CD8-positive, alpha-beta memory T cell (primary cell): ENCODE measurements at regions of chr5 and their contacts with region 1.

Region 1: GRCh38 chr5:141564216-141564692 is 54.5 kb downstream of the DIAPH1 start:
- DNase-seq: peak; percentile 45 to 84 (median 72)
- H3K4me3 ChIP-seq: no peak overlapping the region
- H3K4me3 Mint-ChIP-seq: peak overlapping the region in 1 of 7 donors; percentile 5
- H3K27ac ChIP-seq: no peak overlapping the region
- H3K27ac Mint-ChIP-seq: peak overlapping the region; percentile 43 to 95 (median 82)
- H3K4me1 ChIP-seq: peaks cover 4% of the 10 kb centered on the region
- H3K4me1 Mint-ChIP-seq: peaks cover 33 to 58% (median 38%) of the 10 kb centered on the region in 3 donors
- H3K27me3 ChIP-seq: no peaks in the 10 kb centered on the region
- H3K27me3 Mint-ChIP-seq: no peaks in the 10 kb centered on the region

Region 2: GRCh38 chr5:141320225-141321169 is 243.8 kb before region 1 on chr5 and contains the start of gene TAF7:
- CTCF ChIA-PET with region 1: interaction called, 23 read pairs
- POLR2A ChIA-PET with region 1: interaction called, 5 read pairs
- DNase-seq: peak; percentile 89 to 95 (median 90)
- H3K4me3 ChIP-seq: peak within 1 kb of the TSS; percentile 96
- H3K4me3 Mint-ChIP-seq: peak within 1 kb of the TSS; percentile 91 to 99 (median 95)
- H3K27ac ChIP-seq: peak within 1 kb of the TSS; percentile 97
- H3K27ac Mint-ChIP-seq: peak within 1 kb of the TSS; percentile 95 to 99 (median 99)
- H3K4me1 ChIP-seq: peaks cover 16% of the 10 kb centered on the region
- H3K4me1 Mint-ChIP-seq: peaks cover 26 to 48% (median 31%) of the 10 kb centered on the region in 3 donors
- H3K27me3 ChIP-seq: no peaks in the 10 kb centered on the region
- H3K27me3 Mint-ChIP-seq: peaks cover 4% of the 10 kb centered on the region in 2 donors
- total RNA-seq, gene TAF7: 70.9 to 72.2 TPM

Region 3: GRCh38 chr5:141512390-141512910 is 51.8 kb before region 1 on chr5:
- CTCF ChIA-PET with region 1: interaction called, 21 read pairs
- POLR2A ChIA-PET with region 1: no interaction called
- DNase-seq: peak; percentile 67 to 88 (median 79)
- H3K4me3 ChIP-seq: peak overlapping the region; percentile 65
- H3K4me3 Mint-ChIP-seq: peak overlapping the region; percentile 74 to 88 (median 85)
- H3K27ac ChIP-seq: no peak overlapping the region
- H3K27ac Mint-ChIP-seq: peak overlapping the region in 4 of 8 donors; percentile 27 to 74 (median 65)
- H3K4me1 ChIP-seq: peaks cover 23% of the 10 kb centered on the region
- H3K4me1 Mint-ChIP-seq: peaks cover 27 to 39% (median 33%) of the 10 kb centered on the region in 3 donors
- H3K27me3 ChIP-seq: no peaks in the 10 kb centered on the region
- H3K27me3 Mint-ChIP-seq: peaks cover 0 to 1% of the 10 kb centered on the region in 2 donors

Region 4: GRCh38 chr5:141547488-141547887 is 16.8 kb before region 1 on chr5:
- CTCF ChIA-PET with region 1: interaction called, 10 read pairs
- POLR2A ChIA-PET with region 1: no interaction called
- DNase-seq: no peak
- H3K4me3 ChIP-seq: no peak overlapping the region
- H3K4me3 Mint-ChIP-seq: peak overlapping the region in 1 of 7 donors; percentile 40
- H3K27ac ChIP-seq: no peak overlapping the region
- H3K27ac Mint-ChIP-seq: no peak overlapping the region
- H3K4me1 ChIP-seq: peaks cover 7% of the 10 kb centered on the region
- H3K4me1 Mint-ChIP-seq: peaks cover 56 to 74% (median 68%) of the 10 kb centered on the region in 3 donors
- H3K27me3 ChIP-seq: no peaks in the 10 kb centered on the region
- H3K27me3 Mint-ChIP-seq: no peaks in the 10 kb centered on the region

Region 5: GRCh38 chr5:141636413-141637122 is 72.3 kb after region 1 on chr5 and contains the starts of genes HDAC3 and RELL2:
- CTCF ChIA-PET with region 1: interaction called, 18 read pairs
- POLR2A ChIA-PET with region 1: interaction called, 5 read pairs
- DNase-seq: peak; percentile 89 to 94 (median 91)
- H3K4me3 ChIP-seq: peak within 1 kb of the TSS; percentile 97
- H3K4me3 Mint-ChIP-seq: peak within 1 kb of the TSS; percentile 92 to 96 (median 94)
- H3K27ac ChIP-seq: peak within 1 kb of the TSS; percentile 85
- H3K27ac Mint-ChIP-seq: peak within 1 kb of the TSS; percentile 90 to 98 (median 93)
- H3K4me1 ChIP-seq: peaks cover 35% of the 10 kb centered on the region
- H3K4me1 Mint-ChIP-seq: peaks cover 32 to 55% (median 50%) of the 10 kb centered on the region in 3 donors
- H3K27me3 ChIP-seq: no peaks in the 10 kb centered on the region
- H3K27me3 Mint-ChIP-seq: peaks cover 0 to 1% of the 10 kb centered on the region in 2 donors
- total RNA-seq, gene HDAC3: 74.8 to 78.6 TPM
- total RNA-seq, gene RELL2: 24.8 to 26.2 TPM